ENCODE measurements at regions of chr12 and their contacts with region 1.

Region 1: DNA sequence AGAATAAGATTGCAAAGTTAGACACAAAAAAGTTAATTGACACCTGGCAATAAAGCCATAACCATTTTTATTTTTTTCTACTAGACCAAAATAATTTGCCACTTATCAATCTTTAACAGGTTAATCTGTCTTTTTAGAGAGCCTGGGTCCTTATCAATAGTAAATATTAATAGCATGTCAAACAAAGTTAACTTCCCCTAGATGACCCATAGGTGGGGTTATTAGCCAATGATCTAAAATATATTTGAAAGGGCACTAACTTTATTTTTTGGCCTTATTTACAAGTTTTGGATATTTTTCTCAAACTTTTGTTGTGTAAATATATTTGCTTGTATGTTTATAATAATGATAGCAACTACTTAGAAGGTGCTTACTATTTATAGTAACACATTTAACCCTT is 3.9 kb downstream of the ANKRD33 start:
- DNase-seq: no peak

Region 2: DNA sequence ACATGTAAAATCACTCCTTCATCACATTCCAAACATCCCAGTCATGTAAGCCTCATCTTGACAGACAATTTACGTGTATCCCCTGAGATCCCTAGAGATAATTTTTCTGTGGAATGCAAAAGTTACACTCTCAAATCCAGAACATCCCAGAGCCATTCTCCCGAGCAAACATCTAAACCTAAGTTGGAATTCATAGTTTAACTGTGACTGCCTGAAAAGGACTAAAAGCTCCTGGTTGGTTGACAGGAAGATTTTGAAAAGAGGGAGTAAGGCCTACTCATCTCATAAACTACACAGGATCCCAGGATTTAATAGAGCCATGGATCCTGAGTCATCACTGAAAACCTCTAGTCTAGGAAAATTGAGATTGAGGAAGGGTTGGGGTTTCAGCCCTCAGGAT is 177.2 kb before region 1 on chr12:
- intact Hi-C with region 1: no loop called
- DNase-seq: no peak

Region 3: DNA sequence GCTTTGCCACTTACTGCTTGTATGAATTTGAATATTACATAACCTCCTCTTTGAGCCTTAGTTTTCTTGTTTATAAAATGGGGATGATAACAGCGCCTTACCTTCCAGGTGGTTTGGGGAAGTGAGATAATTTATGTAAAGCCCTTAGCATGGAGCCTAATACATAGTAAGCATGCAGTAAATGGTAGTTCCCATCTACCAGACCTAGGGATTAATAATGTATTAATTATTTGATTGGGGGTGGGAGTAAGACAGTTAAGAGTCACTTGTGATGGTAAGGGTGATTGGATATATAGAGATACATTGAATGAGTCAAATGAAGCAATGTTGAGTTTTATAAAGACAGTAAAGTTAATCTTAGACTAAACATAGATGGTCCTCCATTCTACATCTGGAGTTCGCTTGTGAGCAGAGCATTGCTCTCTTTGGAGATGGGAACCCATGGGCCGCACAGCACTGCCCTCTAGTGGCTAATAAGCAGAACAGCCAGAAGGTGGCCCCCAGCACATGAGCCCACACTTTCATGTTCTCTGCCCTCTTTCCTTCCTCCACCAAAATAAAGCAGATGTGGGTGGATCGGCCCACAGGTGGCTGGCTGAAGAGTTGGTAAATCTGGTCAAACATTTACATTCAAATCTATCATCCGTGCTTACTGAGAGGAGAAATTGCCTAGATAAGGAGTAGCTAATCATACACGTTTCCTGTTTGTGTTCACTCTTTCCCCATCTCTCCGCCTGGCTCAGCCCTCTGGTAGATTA is 88.4 kb after region 1 on chr12:
- intact Hi-C with region 1: loop called (anchors 10 kb)
- DNase-seq: peak; percentile 38 to 89 (median 72)